OCI-LY7 (cell line): ENCODE measurements at regions of chr11 and their contacts with region 1.

Region 1: GRCh38 chr11:18987454-18988231 is 48.4 kb upstream of the MRGPRX1 start:
- DNase-seq: no peak
- H3K4me3 ChIP-seq: no peak overlapping the region
- H3K27ac ChIP-seq: no peak overlapping the region
- H3K4me1 ChIP-seq: no peaks in the 10 kb centered on the region
- CTCF ChIP-seq: no peak

Region 2: GRCh38 chr11:19013181-19013857 is 25.7 kb after region 1 on chr11:
- CTCF ChIA-PET with region 1: no interaction called
- POLR2A ChIA-PET with region 1: no interaction called
- intact Hi-C with region 1: loop called (anchors 1 kb)
- DNase-seq: no peak
- H3K4me3 ChIP-seq: no peak overlapping the region
- H3K27ac ChIP-seq: no peak overlapping the region
- H3K4me1 ChIP-seq: no peaks in the 10 kb centered on the region
- CTCF ChIP-seq: peak; percentile 65

Region 3: GRCh38 chr11:19342036-19342435 is 354.4 kb after region 1 on chr11:
- CTCF ChIA-PET with region 1: no interaction called
- POLR2A ChIA-PET with region 1: no interaction called
- intact Hi-C with region 1: no loop called
- DNase-seq: no peak
- H3K4me3 ChIP-seq: no peak overlapping the region
- H3K27ac ChIP-seq: no peak overlapping the region
- H3K4me1 ChIP-seq: no peaks in the 10 kb centered on the region
- CTCF ChIP-seq: no peak